Activated naive CD4-positive, alpha-beta T cell treated with anti-CD3 and anti-CD28 coated beads for 36 hours (primary cell): ENCODE measurements at regions of chr4 and their contacts with region 1.

Region 1: DNA sequence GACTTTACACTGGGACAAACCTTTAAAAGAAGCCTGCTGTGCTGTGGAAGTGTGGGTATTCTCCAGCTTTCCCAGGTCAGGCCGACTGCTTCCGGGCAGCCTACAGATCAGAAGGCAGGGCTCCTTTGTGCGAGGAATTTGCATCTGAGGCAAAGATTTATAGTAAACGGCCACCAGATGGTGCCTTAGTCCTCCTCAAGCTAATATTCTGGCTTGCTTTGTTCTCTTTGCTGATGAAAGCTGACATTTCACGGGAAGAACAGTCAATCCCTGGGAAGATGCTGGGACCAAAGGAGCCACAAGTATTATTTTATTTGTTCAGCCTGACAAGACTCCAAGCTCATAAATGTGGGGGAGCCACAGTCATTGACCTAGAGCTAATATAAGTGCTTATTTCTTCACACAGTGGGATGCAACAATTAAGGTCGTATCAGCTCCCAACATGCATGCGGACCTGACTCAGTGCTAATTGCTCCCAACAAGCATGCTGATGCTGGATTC is 120.7 kb upstream of the TRIM2 start:
- DNase-seq: peak; percentile 70
- H3K4me3 Mint-ChIP-seq: peak overlapping the region; percentile 28
- H3K27ac Mint-ChIP-seq: no peak overlapping the region
- H3K4me1 Mint-ChIP-seq: peaks cover 43% of the 10 kb centered on the region
- H3K27me3 Mint-ChIP-seq: peaks cover 2% of the 10 kb centered on the region

Region 2: GRCh38 chr4:152408514-152409327 is 674.8 kb before region 1 on chr4:
- CTCF ChIA-PET with region 1: no interaction called
- intact Hi-C with region 1: loop called (anchors 5 kb)
- DNase-seq: peak; percentile 35
- H3K4me3 Mint-ChIP-seq: no peak overlapping the region
- H3K27ac Mint-ChIP-seq: no peak overlapping the region
- H3K4me1 Mint-ChIP-seq: peaks cover 7% of the 10 kb centered on the region
- H3K27me3 Mint-ChIP-seq: no peaks in the 10 kb centered on the region

Region 3: GRCh38 chr4:152850377-152850776 is 233.1 kb before region 1 on chr4:
- CTCF ChIA-PET with region 1: interaction called, 15 read pairs
- intact Hi-C with region 1: loop called (anchors 1 kb)
- DNase-seq: peak; percentile 74
- H3K4me3 Mint-ChIP-seq: no peak overlapping the region
- H3K27ac Mint-ChIP-seq: no peak overlapping the region
- H3K4me1 Mint-ChIP-seq: peaks cover 16% of the 10 kb centered on the region
- H3K27me3 Mint-ChIP-seq: no peaks in the 10 kb centered on the region

Region 4: GRCh38 chr4:153107246-153107645 is 23.7 kb after region 1 on chr4:
- CTCF ChIA-PET with region 1: interaction called, 75 read pairs
- intact Hi-C with region 1: loop called (anchors 2 kb)
- DNase-seq: no peak
- H3K4me3 Mint-ChIP-seq: no peak overlapping the region
- H3K27ac Mint-ChIP-seq: no peak overlapping the region
- H3K4me1 Mint-ChIP-seq: no peaks in the 10 kb centered on the region
- H3K27me3 Mint-ChIP-seq: no peaks in the 10 kb centered on the region

Region 5: GRCh38 chr4:153127760-153128494 is 44.4 kb after region 1 on chr4:
- CTCF ChIA-PET with region 1: interaction called, 376 read pairs
- intact Hi-C with region 1: loop called (anchors 1 kb)
- DNase-seq: peak; percentile 95
- H3K4me3 Mint-ChIP-seq: no peak overlapping the region
- H3K27ac Mint-ChIP-seq: no peak overlapping the region
- H3K4me1 Mint-ChIP-seq: peaks cover 9% of the 10 kb centered on the region
- H3K27me3 Mint-ChIP-seq: no peaks in the 10 kb centered on the region

Region 6: DNA sequence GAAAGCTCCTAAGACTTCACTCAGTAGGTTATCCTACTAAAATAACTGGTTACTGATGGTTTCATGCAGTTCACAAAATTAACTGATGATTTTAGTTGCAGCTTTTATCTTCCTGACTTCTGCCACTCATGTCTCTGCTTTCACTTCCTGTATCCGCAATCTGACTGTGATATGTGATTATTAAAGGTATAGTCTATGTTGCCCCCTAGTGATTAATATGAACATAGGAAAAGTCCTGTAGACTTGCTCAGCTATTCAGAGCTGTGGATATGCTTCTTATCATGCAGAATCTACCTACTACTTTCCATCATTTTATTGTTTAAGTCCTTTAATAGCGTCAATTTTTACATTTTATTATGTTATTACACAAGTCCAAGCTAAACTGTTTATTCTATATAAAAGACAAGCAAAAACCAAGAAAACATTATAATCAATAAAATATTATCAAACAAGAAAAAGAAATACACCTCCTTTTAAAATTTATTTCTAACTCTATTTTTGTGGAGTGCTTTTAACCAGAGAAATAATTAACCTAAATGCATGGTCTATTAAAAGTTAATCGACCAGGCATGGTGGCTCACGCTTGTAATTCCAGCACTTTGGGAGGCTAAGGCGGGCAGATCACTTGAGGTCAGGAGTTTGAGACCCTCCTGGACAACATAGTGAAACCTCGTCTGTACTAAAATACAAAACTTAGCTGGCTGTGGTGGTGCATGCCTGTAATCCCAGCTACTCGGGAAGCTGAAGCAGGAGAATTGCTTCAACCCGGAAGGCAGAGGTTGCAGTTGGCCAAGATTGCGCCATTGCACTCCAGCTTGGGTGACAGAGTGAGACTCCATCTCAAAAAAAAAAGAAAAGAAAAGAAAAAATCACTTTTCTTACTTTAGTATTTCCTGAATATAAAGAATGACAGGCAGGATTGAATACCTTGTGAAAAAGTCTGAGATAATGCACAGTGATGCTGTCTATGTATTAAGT is 560.2 kb after region 1 on chr4:
- CTCF ChIA-PET with region 1: interaction called, 4 read pairs
- intact Hi-C with region 1: loop called (anchors 2 kb)
- DNase-seq: no peak
- H3K4me3 Mint-ChIP-seq: no peak overlapping the region
- H3K27ac Mint-ChIP-seq: no peak overlapping the region
- H3K4me1 Mint-ChIP-seq: peaks cover 17% of the 10 kb centered on the region
- H3K27me3 Mint-ChIP-seq: no peaks in the 10 kb centered on the region